ENCODE measurements at regions of chr10 and their contacts with region 1.

Region 1: DNA sequence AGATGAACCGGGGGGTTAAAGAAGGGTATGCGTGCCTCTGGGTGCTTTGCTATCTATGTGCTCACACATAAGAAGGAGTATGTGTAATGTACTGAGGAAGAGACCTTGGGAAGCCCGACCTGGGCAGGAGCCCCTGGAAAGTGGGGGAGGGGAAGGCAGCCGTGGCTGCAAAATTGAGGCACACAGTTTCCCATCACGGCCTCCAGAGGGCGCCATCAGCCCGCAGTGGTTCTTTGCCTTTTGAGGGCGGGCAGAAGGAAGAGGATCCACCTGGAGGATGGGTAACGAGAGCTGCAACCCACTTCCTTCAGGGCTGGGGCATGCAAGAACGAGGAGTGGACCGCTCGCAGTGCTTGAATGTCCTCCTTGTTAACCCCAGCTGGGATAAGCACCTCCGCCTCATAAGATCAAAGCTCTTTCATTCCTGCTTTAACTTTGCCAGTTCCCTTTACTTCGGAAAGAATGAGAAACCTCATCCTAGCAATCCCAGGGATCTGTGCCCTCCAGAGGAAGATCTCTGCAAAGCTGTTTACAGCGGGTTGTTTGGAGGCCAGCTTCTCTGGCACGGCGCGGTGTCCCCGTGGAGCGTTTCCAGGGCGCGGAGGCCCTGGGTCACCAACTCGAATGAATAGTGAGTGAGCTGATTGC is 77.9 kb downstream of the PCGF5 start:
- DNase-seq: peak; percentile 57 to 89 (median 74)
- ATAC-seq: peak; percentile 93 to 99 (median 96)
- H3K4me3 ChIP-seq: peak overlapping the region; percentile 2 to 34
- H3K4me3 Mint-ChIP-seq: peak overlapping the region; percentile 68 to 75 (median 70)
- H3K27ac ChIP-seq: no peak overlapping the region
- H3K27ac Mint-ChIP-seq: no peak overlapping the region
- H3K4me1 ChIP-seq: peaks cover 0 to 8% of the 10 kb centered on the region in 2 experiments
- H3K4me1 Mint-ChIP-seq: peaks cover 9 to 11% (median 10%) of the 10 kb centered on the region in 3 donors
- H3K27me3 ChIP-seq: no peaks in the 10 kb centered on the region
- H3K27me3 Mint-ChIP-seq: peaks cover 2 to 11% of the 10 kb centered on the region in 2 donors

Region 2: GRCh38 chr10:91287276-91287675 is 11.1 kb before region 1 on chr10:
- CTCF ChIA-PET with region 1: interaction called, 7 to 12 read pairs
- POLR2A ChIA-PET with region 1: no interaction called
- DNase-seq: no peak
- ATAC-seq: no peak
- H3K4me3 ChIP-seq: no peak overlapping the region
- H3K4me3 Mint-ChIP-seq: no peak overlapping the region
- H3K27ac ChIP-seq: no peak overlapping the region
- H3K27ac Mint-ChIP-seq: no peak overlapping the region
- H3K4me1 ChIP-seq: no peaks in the 10 kb centered on the region
- H3K4me1 Mint-ChIP-seq: no peaks in the 10 kb centered on the region
- H3K27me3 ChIP-seq: no peaks in the 10 kb centered on the region
- H3K27me3 Mint-ChIP-seq: no peaks in the 10 kb centered on the region

Region 3: GRCh38 chr10:91311601-91312381 is 13.4 kb after region 1 on chr10:
- CTCF ChIA-PET with region 1: interaction called, 3 to 17 read pairs
- POLR2A ChIA-PET with region 1: no interaction called
- DNase-seq: no peak
- ATAC-seq: no peak
- H3K4me3 ChIP-seq: no peak overlapping the region
- H3K4me3 Mint-ChIP-seq: no peak overlapping the region
- H3K27ac ChIP-seq: no peak overlapping the region
- H3K27ac Mint-ChIP-seq: no peak overlapping the region
- H3K4me1 ChIP-seq: peaks cover 0 to 2% of the 10 kb centered on the region in 2 experiments
- H3K4me1 Mint-ChIP-seq: peaks cover 5 to 8% (median 7%) of the 10 kb centered on the region in 3 donors
- H3K27me3 ChIP-seq: peaks cover 0 to 6% of the 10 kb centered on the region in 2 experiments
- H3K27me3 Mint-ChIP-seq: peaks cover 10 to 13% of the 10 kb centered on the region in 2 donors

Region 4: DNA sequence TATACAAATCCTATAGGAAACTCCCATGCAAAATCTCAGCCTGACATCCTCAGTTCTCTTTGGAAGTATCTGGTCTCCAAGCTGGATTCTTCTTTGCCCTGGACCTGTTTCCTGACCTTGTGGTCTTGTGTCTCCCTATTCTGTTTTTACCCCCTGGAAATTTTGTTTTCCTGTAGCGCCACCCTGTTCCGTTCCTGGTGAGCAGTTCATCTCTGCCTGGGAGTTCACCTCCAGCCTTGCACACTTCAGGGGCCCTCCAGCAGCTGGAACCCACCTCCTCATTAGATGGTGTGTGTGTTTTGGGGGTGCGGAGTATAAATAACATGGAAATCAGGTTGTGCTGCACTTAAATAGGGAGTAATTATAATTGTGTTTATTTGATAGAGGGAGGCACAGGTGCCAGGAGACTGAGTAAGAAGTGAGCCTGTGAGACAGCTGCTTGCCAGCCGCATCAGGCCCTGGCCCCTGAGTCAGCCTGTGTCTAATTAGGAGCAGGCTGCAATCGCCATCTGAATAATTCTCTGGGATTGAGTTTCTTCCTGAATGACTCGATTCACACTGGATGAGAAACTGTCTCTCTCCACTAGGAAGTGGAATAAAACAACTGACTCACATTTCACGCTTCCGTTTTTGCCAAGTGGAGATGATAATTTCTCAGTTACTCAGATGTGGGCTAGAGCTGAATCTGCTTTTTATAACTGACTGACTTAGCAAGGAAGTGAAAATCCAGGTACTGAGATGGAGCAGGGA is 42.4 kb after region 1 on chr10:
- CTCF ChIA-PET with region 1: interaction called in 1 of 2 experiments, 12 read pairs
- POLR2A ChIA-PET with region 1: no interaction called
- DNase-seq: no peak
- ATAC-seq: no peak
- H3K4me3 ChIP-seq: no peak overlapping the region
- H3K4me3 Mint-ChIP-seq: no peak overlapping the region
- H3K27ac ChIP-seq: no peak overlapping the region
- H3K27ac Mint-ChIP-seq: no peak overlapping the region
- H3K4me1 ChIP-seq: no peaks in the 10 kb centered on the region
- H3K4me1 Mint-ChIP-seq: no peaks in the 10 kb centered on the region
- H3K27me3 ChIP-seq: no peaks in the 10 kb centered on the region
- H3K27me3 Mint-ChIP-seq: no peaks in the 10 kb centered on the region

Region 5: GRCh38 chr10:91632671-91633550 is 334.6 kb after region 1 on chr10 and contains the start of gene PPP1R3C:
- CTCF ChIA-PET with region 1: interaction called, 55 to 61 read pairs
- POLR2A ChIA-PET with region 1: no interaction called
- DNase-seq: peak in 19 of 35 experiments; percentile 1 to 26 (median 13)
- ATAC-seq: peak; percentile 60 to 87 (median 80)
- H3K4me3 ChIP-seq: peak within 1 kb of the TSS; percentile 11 to 53
- H3K4me3 Mint-ChIP-seq: peak within 1 kb of the TSS; percentile 55 to 66 (median 62)
- H3K27ac ChIP-seq: no peak within 1 kb of the TSS
- H3K27ac Mint-ChIP-seq: no peak within 1 kb of the TSS
- H3K4me1 ChIP-seq: peaks cover 0 to 12% of the 10 kb centered on the region in 2 experiments
- H3K4me1 Mint-ChIP-seq: peaks cover 7 to 13% (median 10%) of the 10 kb centered on the region in 3 donors
- H3K27me3 ChIP-seq: peaks cover 9 to 29% of the 10 kb centered on the region in 2 experiments
- H3K27me3 Mint-ChIP-seq: peaks cover 50 to 66% of the 10 kb centered on the region in 2 donors
- total RNA-seq, gene PPP1R3C: 0.13 to 0.26 (median 0.19) TPM in 3 of 5 donors, not detected in the others

Region 6: DNA sequence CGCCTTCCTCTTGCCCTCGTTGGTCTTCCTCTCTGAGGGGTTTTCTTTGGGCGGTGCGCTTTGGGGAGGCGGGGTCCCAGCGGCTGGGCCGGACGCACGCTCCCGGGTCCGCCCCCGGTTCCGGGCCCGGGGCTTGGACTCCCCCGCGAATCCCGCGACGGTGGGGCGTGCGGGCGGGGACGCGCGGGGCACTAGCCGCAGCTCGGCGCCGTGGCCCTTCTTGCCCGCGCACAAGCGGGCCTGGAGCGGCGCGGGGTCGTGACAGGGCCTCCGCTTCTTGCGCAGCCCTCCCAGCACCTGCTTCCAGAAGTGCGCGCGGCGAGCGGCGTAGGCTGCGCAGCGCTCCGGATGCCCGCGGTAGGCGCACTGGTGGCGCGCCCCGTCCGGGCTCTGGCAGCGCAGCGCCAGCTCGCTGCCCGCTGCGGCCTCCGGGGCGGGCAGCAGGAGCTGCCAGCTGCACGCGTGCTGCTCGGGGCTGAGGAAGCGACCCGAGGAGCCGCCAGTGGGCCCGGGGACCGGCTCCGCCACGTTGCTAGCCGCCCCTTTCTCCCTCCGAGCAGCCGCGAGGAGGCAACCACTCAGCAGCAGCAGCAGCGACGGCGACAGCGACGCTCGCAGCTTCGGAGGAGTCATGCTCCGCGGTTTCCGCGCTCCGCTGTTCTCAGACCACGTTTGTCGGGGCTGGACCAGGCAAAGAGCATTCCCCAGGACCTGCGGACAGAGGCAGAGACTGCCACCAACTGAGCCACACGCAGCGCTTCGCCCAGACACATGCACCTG is 610.2 kb after region 1 on chr10:
- CTCF ChIA-PET with region 1: interaction called, 4 to 10 read pairs
- POLR2A ChIA-PET with region 1: interaction called in 1 of 2 experiments, 3 read pairs
- DNase-seq: peak; percentile 27 to 83 (median 60)
- ATAC-seq: peak; percentile 87 to 91 (median 87)
- H3K4me3 ChIP-seq: peak overlapping the region; percentile 63 to 95
- H3K4me3 Mint-ChIP-seq: peak overlapping the region; percentile 86 to 96 (median 90)
- H3K27ac ChIP-seq: peak overlapping the region; percentile 53
- H3K27ac Mint-ChIP-seq: peak overlapping the region; percentile 85 to 92
- H3K4me1 ChIP-seq: peaks cover 12 to 17% of the 10 kb centered on the region in 2 experiments
- H3K4me1 Mint-ChIP-seq: peaks cover 25 to 29% (median 28%) of the 10 kb centered on the region in 3 donors
- H3K27me3 ChIP-seq: peaks cover 0 to 3% of the 10 kb centered on the region in 2 experiments
- H3K27me3 Mint-ChIP-seq: peaks cover 4 to 6% of the 10 kb centered on the region in 2 donors

Measured in T-cell (primary cell).